AG04450 (cell line): ENCODE measurements at regions of chr5 and their contacts with region 1.

Region 1: DNA sequence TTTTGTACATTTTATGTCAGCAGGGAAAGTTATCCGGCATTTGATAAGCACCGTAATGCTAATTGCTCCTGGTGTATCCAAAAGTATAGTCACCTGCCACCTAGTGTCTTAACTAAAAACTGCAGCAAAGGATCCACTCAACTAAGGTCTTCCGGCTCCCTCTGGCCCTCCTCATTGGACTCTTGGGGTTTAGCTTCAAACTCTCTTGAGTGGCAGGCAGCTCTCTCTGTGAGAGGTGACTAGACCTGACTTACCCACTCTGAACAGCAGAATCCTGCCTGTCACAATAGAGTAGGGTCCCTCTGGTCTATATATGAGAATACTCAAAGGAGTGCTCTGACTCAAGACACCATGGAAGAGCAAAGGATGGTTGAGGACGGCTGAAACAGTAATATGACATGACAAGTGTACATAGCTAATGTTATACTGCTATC is 60.3 kb upstream of the CAST start:
- DNase-seq: peak; percentile 44
- H3K4me3 ChIP-seq: no peak overlapping the region
- H3K27ac ChIP-seq: no peak overlapping the region
- H3K27me3 ChIP-seq: no peaks in the 10 kb centered on the region
- CTCF ChIP-seq: peak; percentile 85

Region 2: GRCh38 chr5:96344678-96345577 is 256.9 kb before region 1 on chr5:
- CTCF ChIA-PET with region 1: interaction called, 239 read pairs
- POLR2A ChIA-PET with region 1: no interaction called
- DNase-seq: peak; percentile 66
- H3K4me3 ChIP-seq: no peak overlapping the region
- H3K27ac ChIP-seq: no peak overlapping the region
- H3K27me3 ChIP-seq: no peaks in the 10 kb centered on the region
- CTCF ChIP-seq: peak; percentile 61

Region 3: DNA sequence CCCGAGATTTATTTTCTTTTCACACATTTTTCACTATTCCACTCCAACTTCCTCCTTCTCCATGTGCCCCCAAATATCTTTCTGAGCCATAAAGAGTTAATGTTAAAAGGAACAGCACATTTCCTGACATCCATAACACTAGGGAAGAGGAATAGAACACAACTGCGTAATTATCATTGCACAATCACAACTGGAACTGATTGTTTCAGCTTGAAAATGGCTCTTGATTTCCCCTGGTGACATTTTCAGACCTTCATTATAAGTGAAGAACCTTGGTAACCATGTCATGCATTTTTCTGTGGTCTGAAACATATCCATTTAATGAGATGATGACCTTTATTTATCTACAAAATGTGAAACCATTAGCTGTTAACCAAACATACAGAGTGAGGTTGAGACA is 251.2 kb before region 1 on chr5:
- CTCF ChIA-PET with region 1: interaction called, 239 read pairs
- POLR2A ChIA-PET with region 1: no interaction called
- DNase-seq: no peak
- H3K4me3 ChIP-seq: no peak overlapping the region
- H3K27ac ChIP-seq: no peak overlapping the region
- H3K27me3 ChIP-seq: no peaks in the 10 kb centered on the region
- CTCF ChIP-seq: no peak

Region 4: GRCh38 chr5:96588539-96588938 is 13.3 kb before region 1 on chr5:
- CTCF ChIA-PET with region 1: interaction called, 33 read pairs
- POLR2A ChIA-PET with region 1: no interaction called
- DNase-seq: no peak
- H3K4me3 ChIP-seq: no peak overlapping the region
- H3K27ac ChIP-seq: no peak overlapping the region
- H3K27me3 ChIP-seq: no peaks in the 10 kb centered on the region
- CTCF ChIP-seq: no peak

Region 5: DNA sequence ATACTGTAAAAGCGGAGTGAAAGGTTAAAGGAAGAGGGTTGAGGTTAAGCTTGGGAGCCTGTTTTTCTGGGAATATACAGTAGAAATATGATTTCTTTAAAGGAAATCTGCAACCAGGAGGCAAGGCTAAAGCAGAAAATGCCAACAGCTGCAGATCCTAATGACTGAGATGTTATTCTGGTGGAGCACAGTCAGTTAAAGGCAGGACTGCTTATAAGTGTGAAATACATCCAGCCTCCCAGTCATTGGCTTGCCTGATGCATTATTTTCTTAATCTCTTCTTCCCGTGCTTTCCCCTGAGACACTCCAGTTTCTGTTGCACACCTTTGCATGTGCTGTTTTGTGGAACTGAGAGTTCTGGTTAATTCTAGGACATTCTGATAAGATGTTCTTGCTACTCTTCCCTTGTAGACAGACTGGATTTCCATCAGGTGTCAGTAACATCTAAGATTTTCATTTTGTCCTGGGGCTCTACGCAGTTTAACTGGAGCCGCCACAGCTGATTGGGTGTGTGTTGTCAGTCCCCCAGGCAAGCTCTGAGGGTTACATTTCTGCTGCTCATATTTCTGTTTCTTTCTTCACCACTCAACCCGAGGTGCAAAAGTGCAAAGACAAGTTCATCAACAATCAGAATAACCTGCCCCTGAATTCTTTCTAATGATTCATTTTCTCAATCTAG is 104.7 kb after region 1 on chr5:
- CTCF ChIA-PET with region 1: no interaction called
- POLR2A ChIA-PET with region 1: no interaction called
- DNase-seq: no peak
- H3K4me3 ChIP-seq: no peak overlapping the region
- H3K27ac ChIP-seq: no peak overlapping the region
- H3K27me3 ChIP-seq: no peaks in the 10 kb centered on the region
- CTCF ChIP-seq: no peak